OCI-LY7 (cell line): ENCODE measurements at regions of chr9 and their contacts with region 1.

Region 1: DNA sequence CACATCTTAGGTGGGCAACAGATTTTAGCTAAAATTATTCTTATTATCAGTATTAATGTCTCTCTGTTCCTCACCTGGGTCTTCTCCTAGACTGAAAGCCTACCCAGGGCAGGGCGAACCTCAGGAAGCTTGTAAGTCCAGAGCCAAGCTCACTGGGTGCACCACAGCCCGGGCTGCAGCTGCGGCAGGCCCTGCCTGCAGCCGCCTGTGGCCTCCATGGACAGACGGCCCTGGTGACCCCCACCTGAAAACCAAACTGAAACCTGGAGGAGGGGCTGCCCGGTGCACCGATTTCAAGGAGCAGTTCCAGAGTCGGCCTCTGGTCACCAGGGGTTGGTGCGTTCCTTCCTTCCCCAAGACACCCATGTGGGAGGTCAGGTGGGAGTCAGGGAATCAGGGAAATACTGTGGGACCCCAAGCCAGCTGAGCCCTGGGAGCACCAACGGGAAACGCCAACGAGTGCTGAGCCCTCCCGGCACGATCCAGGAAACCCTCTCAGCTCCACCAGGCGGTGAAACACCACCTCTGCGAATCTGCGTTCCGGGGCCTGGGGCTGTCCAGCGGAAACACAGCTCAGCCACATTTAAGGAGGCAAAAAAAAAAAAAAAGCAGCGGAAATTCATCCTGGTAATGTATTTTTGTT is 68.6 kb upstream of the PPP1R26 start:
- DNase-seq: no peak
- H3K4me3 ChIP-seq: no peak overlapping the region
- H3K27ac ChIP-seq: no peak overlapping the region
- H3K4me1 ChIP-seq: no peaks in the 10 kb centered on the region
- CTCF ChIP-seq: no peak

Region 2: GRCh38 chr9:135085830-135086546 is 325.0 kb before region 1 on chr9:
- CTCF ChIA-PET with region 1: no interaction called
- POLR2A ChIA-PET with region 1: no interaction called
- intact Hi-C with region 1: loop called (anchors 5 kb)
- DNase-seq: peak; percentile 26
- H3K4me3 ChIP-seq: no peak overlapping the region
- H3K27ac ChIP-seq: no peak overlapping the region
- H3K4me1 ChIP-seq: no peaks in the 10 kb centered on the region
- CTCF ChIP-seq: peak; percentile 82

Region 3: GRCh38 chr9:135561391-135562234 is 150.7 kb after region 1 on chr9 and contains the start of gene PAEP:
- CTCF ChIA-PET with region 1: no interaction called
- POLR2A ChIA-PET with region 1: no interaction called
- intact Hi-C with region 1: no loop called
- DNase-seq: no peak
- H3K4me3 ChIP-seq: no peak within 1 kb of the TSS
- H3K27ac ChIP-seq: no peak within 1 kb of the TSS
- H3K4me1 ChIP-seq: no peaks in the 10 kb centered on the region
- CTCF ChIP-seq: no peak
- total RNA-seq, gene PAEP: not detected in 2 replicates